HepG2 (cell line): ENCODE measurements at regions of chr10 and their contacts with region 1.

Region 1: GRCh38 chr10:43105102-43105785 is 28.4 kb downstream of the RET start:
- DNase-seq: peak; percentile 36
- ATAC-seq: peak; percentile 90
- H3K4me3 ChIP-seq: peak overlapping the region; percentile 32 to 62 (median 39); a peak in 4 of 6 replicates
- H3K27ac ChIP-seq: no peak overlapping the region
- H3K4me1 ChIP-seq: peaks cover 11% of the 10 kb centered on the region
- H3K27me3 ChIP-seq: peaks cover 0 to 39% of the 10 kb centered on the region in 2 experiments; a peak in 3 of 5 replicates
- CTCF ChIP-seq: peak; percentile 96
- EP300 ChIP-seq: no peak
- POLR2A ChIP-seq: no peak
- RAD21 ChIP-seq: peak; percentile 97

Region 2: DNA sequence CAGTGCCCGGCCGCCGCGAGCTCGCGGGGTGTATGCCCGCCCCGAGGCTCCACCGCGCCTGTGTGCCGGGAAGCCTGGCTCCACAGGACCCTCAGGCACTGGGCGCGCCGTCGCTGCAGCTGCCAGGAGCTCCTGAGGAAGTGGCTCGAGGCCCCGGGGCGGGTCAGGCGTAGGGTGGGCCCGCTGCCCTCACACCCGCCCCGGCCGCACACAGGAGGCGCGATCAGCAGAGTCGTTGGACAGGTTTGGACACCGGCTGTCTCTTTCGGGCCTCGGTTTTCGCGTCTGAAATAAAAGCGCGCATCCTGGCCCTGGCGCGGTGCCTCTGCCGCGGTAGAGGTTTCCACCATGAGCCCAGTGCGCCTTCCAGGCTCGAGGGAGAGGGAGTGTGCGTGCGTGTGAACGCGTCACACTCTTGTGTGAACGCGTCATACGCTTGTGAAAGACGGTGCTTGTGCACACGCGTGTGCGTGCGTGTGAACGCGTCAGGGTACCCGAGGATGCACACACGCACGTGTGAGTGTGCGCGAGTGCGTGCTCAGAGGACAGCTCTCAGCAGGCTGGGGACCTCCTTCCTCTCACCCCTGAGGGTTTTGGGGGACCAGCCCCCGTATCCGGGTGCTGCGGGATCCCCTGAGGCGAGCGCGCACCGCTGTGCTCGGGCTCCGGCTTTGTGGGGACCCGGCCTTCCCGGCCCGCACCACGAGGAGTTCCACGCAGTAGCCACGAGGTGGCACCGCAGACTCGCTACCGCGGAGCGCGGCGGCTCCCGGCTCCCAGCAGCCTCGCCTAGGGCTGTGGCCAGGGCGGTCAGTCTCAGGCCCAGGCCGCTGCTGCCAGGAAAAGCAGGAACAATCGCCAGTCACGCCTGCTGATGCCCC is 238.9 kb before region 1 on chr10:
- CTCF ChIA-PET with region 1: interaction called, 28 read pairs
- POLR2A ChIA-PET with region 1: no interaction called
- in situ Hi-C with region 1: loop called (anchors 5 kb)
- intact Hi-C with region 1: loop called (anchors 1 kb)
- DNase-seq: peak; percentile 30
- ATAC-seq: peak; percentile 100
- H3K4me3 ChIP-seq: peak overlapping the region in 1 of 3 experiments; percentile 16; a peak in 1 of 6 replicates
- H3K27ac ChIP-seq: no peak overlapping the region
- H3K4me1 ChIP-seq: no peaks in the 10 kb centered on the region
- H3K27me3 ChIP-seq: peaks cover 2 to 30% of the 10 kb centered on the region in 2 experiments; a peak in 4 of 5 replicates
- CTCF ChIP-seq: peak; percentile 86
- EP300 ChIP-seq: no peak
- POLR2A ChIP-seq: no peak
- RAD21 ChIP-seq: peak; percentile 80

Region 3: GRCh38 chr10:42872865-42873643 is 232.2 kb before region 1 on chr10:
- CTCF ChIA-PET with region 1: no interaction called
- POLR2A ChIA-PET with region 1: no interaction called
- in situ Hi-C with region 1: loop called (anchors 5 kb)
- intact Hi-C with region 1: no loop called
- DNase-seq: no peak
- ATAC-seq: no peak
- H3K4me3 ChIP-seq: no peak overlapping the region
- H3K27ac ChIP-seq: no peak overlapping the region
- H3K4me1 ChIP-seq: no peaks in the 10 kb centered on the region
- H3K27me3 ChIP-seq: peaks cover 9 to 32% of the 10 kb centered on the region in 2 experiments; a peak in 3 of 5 replicates
- CTCF ChIP-seq: no peak
- EP300 ChIP-seq: no peak
- POLR2A ChIP-seq: no peak
- RAD21 ChIP-seq: no peak

Region 4: DNA sequence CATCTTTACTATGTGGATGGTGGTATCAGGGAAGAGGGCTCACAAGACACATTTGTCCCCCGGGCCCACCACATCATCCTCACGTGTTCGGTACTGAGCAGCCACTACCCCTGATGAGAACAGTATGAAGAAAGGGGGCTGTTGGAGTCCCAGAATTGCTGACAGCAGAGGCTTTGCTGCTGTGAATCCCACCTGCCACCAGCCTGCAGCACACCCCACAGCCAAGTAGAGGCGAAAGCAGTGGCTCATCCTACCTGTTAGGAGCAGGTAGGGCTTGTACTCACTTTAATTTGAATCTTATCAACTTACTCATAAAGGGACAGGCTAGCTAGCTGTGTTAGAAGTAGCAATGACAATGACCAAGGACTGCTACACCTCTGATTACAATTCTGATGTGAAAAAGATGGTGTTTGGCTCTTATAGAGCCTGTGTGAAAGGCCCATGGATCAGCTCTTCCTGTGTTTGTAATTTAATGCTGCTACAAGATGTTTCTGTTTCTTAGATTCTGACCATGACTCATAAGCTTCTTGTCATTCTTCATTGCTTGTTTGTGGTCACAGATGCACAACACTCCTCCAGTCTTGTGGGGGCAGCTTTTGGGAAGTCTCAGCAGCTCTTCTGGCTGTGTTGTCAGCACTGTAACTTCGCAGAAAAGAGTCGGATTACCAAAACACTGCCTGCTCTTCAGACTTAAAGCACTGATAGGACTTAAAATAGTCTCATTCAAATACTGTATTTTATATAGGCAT is 23.9 kb after region 1 on chr10:
- CTCF ChIA-PET with region 1: no interaction called
- POLR2A ChIA-PET with region 1: no interaction called
- in situ Hi-C with region 1: no loop called
- intact Hi-C with region 1: no loop called
- DNase-seq: no peak
- ATAC-seq: no peak
- H3K4me3 ChIP-seq: no peak overlapping the region
- H3K27ac ChIP-seq: no peak overlapping the region
- H3K4me1 ChIP-seq: no peaks in the 10 kb centered on the region
- H3K27me3 ChIP-seq: peaks cover 9 to 66% of the 10 kb centered on the region in 2 experiments
- CTCF ChIP-seq: no peak
- EP300 ChIP-seq: no peak
- POLR2A ChIP-seq: no peak
- RAD21 ChIP-seq: no peak

Region 5: GRCh38 chr10:43145311-43145710 is 40.1 kb after region 1 on chr10:
- CTCF ChIA-PET with region 1: no interaction called
- POLR2A ChIA-PET with region 1: no interaction called
- in situ Hi-C with region 1: no loop called
- intact Hi-C with region 1: no loop called
- DNase-seq: no peak
- ATAC-seq: no peak
- H3K4me3 ChIP-seq: no peak overlapping the region
- H3K27ac ChIP-seq: no peak overlapping the region
- H3K4me1 ChIP-seq: peaks cover 17% of the 10 kb centered on the region
- H3K27me3 ChIP-seq: no peaks in the 10 kb centered on the region
- CTCF ChIP-seq: no peak
- EP300 ChIP-seq: no peak
- POLR2A ChIP-seq: no peak
- RAD21 ChIP-seq: no peak